ENCODE measurements at regions of chr11 and their contacts with region 1.

Region 1: DNA sequence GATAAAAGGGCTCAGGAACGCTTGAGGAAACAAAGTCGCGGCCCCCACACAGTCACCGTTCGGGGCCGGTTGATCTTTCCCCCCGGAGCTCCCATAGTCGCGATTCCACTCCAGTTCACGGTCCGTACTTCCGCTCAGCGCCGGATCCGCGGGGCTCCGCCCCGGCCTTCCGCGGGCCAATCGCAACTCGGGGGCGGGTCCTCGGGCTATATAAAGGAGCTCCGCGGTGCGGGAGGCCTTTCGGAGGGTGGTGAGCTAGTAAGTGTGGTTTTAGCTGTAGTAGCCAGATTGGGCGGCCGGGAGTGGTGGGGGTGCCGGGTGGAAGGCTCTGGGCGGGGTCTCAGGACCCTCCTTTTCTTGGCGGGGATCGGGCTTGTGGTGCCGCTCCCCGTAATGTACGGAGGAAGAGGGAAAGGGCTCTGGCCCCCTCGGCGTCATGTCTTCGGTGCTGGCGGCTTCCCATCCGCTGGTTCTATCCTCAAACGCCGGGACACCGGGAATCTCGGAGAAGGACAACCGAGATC is at the starts of genes C11orf98 and CSKMT:
- DNase-seq: peak; percentile 94 to 97 (median 97)
- H3K4me3 ChIP-seq: peak within 1 kb of the TSS; percentile 79 to 99 (median 94)
- H3K27ac ChIP-seq: peak within 1 kb of the TSS; percentile 66 to 87
- H3K4me1 ChIP-seq: peaks cover 4 to 38% (median 28%) of the 10 kb centered on the region in 4 experiments
- H3K27me3 ChIP-seq: no peaks in the 10 kb centered on the region

Region 2: DNA sequence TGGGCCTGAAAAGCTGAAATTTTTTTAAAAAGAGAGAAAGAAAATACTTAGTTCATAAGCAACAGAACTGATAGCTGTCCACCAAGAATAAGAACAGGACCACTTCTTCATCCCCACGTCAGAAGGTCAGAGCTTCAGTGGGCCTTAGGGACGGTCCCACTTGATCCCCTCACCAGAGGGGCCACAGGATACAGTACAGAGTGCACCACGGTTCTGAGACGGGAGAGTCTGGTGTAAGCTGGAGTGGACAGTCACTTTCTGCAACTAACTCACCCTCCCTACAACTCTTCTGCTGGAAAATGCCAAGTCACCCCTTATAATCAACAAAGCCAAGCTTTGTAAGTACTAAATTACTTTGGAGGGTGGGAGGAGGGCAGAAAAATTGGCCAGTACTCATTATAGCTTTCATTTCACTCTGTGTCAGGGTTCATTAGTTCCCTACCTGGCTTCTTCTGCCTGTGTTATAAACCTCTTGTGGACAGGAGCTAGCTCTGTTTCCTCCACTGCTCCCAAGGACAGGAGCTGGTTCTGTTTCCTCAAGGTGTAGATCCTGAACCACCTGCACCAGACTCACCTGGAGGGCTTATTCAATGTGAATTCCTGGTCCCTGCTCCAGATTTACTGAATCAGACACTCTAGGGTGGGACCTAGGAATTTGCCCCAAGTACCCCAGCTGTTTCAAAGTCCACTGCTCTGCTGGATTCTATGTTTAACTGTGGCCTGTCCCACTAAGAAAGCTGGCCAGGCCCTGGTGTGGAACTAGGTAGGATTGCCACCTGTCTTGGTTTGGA is 206.7 kb before region 1 on chr11:
- CTCF ChIA-PET with region 1: no interaction called
- POLR2A ChIA-PET with region 1: no interaction called
- DNase-seq: peak in 2 of 3 donors; percentile 51 to 68
- H3K4me3 ChIP-seq: no peak overlapping the region
- H3K27ac ChIP-seq: peak overlapping the region in 1 of 2 experiments; percentile 21
- H3K4me1 ChIP-seq: peaks cover 0 to 6% (median 4%) of the 10 kb centered on the region in 4 experiments
- H3K27me3 ChIP-seq: no peaks in the 10 kb centered on the region

Region 3: DNA sequence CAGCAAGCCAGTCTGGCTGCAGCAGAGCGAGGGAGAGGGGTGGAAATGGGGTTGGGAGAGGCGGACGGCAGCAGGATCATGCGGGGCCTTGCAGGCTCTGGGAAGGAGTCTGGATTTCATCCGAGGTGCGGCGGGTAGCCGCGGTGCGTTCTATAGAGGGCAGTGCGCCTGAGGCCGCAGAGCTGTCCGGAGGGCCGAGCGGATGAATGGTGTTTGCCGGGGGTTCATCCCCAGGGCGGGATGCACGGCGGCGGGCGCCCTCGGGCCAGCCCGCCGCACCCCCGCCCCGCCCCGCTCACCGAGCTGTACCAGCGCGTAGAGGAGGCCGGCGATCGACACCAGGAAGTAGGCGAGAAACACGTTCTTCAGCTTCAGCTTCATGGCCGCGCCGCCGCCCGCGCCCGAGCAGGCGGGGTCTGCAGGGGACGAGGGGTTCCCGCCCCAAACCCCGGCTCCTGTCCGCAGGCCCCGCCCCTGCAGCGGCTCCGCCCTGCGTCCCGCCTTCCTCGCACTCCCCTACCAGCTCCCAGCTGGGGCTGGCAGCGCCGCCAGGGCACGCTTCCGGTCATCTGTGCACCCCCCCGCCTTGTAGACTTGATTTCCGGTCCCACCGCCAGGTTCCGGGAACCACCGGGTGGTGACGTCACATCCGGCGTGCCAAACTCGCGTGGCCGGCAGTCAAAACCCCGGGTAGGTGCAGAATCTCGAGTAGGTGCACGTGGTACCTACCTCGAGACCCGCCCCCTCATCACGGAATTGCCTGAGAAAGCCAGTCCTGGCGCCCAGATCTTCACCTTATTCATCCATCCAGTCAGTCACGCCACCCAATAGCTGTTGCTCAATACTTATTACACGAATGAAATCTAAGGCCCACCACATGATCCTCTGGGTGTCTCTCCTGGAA is 43.3 kb before region 1 on chr11 and contains the start of gene B3GAT3:
- CTCF ChIA-PET with region 1: interaction called, 4 read pairs
- POLR2A ChIA-PET with region 1: interaction called, 17 read pairs
- DNase-seq: peak; percentile 94 to 97 (median 97)
- H3K4me3 ChIP-seq: peak within 1 kb of the TSS; percentile 50 to 96 (median 78)
- H3K27ac ChIP-seq: peak within 1 kb of the TSS; percentile 72 to 83
- H3K4me1 ChIP-seq: peaks cover 8 to 35% (median 30%) of the 10 kb centered on the region in 4 experiments
- H3K27me3 ChIP-seq: no peaks in the 10 kb centered on the region

Region 4: DNA sequence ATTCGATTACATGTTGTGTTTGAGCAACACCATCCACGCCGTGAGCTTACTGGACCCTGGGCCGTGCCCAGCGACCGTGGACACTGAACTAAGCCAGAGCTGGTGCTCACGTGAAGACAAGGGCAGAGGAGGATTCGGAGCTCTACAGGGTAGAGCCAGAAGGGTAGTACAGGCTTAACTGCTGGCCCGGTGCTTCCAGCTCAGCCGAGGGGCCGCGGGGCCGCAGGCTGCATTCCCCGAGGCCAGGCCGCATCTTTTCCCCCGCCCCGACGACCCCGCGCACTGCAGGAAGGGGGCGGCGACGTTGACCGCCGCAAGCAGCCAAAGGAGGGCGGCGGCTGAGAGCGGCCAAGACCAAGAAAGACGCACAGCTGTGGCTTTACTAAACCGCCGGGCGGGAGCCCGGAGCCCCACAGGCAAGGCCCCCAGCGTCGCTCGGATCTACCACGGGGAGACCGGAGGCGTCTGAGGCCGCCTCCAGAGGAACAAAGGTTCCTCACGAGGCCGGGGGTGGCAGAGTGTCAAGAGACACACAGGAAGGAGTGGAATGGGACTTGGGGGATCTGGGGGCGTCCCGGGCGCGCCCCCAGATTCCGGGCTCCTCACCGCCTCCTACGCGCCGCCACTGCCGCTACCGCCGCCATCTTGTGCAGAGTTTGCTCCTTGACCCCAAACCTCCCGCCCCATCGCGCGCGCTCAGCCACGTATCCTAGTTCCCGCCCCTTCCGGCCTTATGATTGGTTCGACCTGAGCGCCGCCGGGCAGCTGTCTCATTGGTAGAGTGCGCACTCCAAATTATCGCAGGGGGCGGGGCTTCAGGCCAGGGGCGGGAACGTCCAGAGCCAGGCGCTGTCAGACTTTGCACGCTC is 18.9 kb before region 1 on chr11 and contains the start of gene GANAB:
- CTCF ChIA-PET with region 1: interaction called, 33 read pairs
- POLR2A ChIA-PET with region 1: interaction called, 23 read pairs
- DNase-seq: peak; percentile 98 to 99 (median 99)
- H3K4me3 ChIP-seq: peak within 1 kb of the TSS; percentile 81 to 100 (median 92)
- H3K27ac ChIP-seq: peak within 1 kb of the TSS; percentile 93 to 97
- H3K4me1 ChIP-seq: peaks cover 0 to 25% (median 21%) of the 10 kb centered on the region in 4 experiments
- H3K27me3 ChIP-seq: no peaks in the 10 kb centered on the region

Region 5: DNA sequence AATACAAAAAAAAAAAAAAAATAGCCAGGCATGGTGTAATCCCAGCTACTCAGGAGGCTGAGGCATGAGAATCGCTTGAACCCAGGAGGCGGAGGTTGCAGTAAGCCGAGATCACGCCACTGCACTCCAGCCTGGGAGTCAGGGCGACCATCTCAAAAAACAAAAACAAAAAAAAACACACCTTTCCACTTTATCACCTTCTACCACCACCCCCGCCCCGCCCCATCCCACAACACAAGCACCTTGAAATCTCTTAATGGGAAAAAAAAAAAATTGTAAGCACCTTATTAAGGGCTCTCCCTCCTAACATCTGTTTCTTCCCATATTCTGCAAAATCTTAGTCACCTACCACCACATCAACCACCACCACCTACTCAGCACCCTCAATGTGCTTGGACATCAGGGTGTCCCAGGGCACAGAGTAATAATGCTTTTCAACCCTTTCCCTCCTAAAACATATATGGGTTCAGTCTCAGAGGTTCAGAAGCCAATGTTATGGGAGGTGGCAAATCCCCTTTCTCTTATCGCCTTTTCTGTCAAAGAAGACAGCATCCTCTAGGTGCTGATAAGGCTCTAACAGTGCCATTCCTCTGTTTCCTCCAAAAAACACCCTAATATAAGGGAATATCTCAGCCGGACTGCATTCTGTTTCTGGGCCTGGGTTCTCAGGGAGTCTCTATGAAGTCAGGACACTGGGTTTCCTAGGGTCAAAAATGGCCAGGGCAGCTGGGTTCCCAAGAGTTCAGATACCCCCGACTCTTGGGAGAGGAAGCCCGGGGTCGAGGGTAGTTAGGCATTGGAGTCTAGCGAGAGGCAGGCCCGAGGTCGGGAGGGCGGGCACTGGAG is 12.8 kb before region 1 on chr11:
- CTCF ChIA-PET with region 1: interaction called, 33 read pairs
- POLR2A ChIA-PET with region 1: interaction called, 33 read pairs
- DNase-seq: peak in 2 of 3 donors; percentile 7 to 13
- H3K4me3 ChIP-seq: peak overlapping the region; percentile 81 to 97 (median 94)
- H3K27ac ChIP-seq: peak overlapping the region; percentile 89 to 94
- H3K4me1 ChIP-seq: peaks cover 0 to 21% (median 14%) of the 10 kb centered on the region in 4 experiments
- H3K27me3 ChIP-seq: no peaks in the 10 kb centered on the region

Region 6: GRCh38 chr11:62678770-62679696 is 13.9 kb after region 1 on chr11 and contains the start of gene UBXN1:
- CTCF ChIA-PET with region 1: interaction called, 29 read pairs
- POLR2A ChIA-PET with region 1: interaction called, 6 read pairs
- DNase-seq: peak; percentile 90 to 92 (median 90)
- H3K4me3 ChIP-seq: peak within 1 kb of the TSS; percentile 71 to 96 (median 90)
- H3K27ac ChIP-seq: peak within 1 kb of the TSS; percentile 93 to 96
- H3K4me1 ChIP-seq: peaks cover 2 to 26% (median 16%) of the 10 kb centered on the region in 4 experiments
- H3K27me3 ChIP-seq: no peaks in the 10 kb centered on the region